ENCODE measurements at regions of chr5 and their contacts with region 1.

Region 1: GRCh38 chr5:113612060-113612496 is 98.6 kb downstream of the YTHDC2 start:
- DNase-seq: no peak
- ATAC-seq: peak; percentile 57
- H3K4me3 Mint-ChIP-seq: no peak overlapping the region
- H3K27ac Mint-ChIP-seq: no peak overlapping the region
- H3K4me1 Mint-ChIP-seq: peaks cover 7% of the 10 kb centered on the region
- H3K27me3 Mint-ChIP-seq: peaks cover 10% of the 10 kb centered on the region

Region 2: GRCh38 chr5:113663880-113664541 is 51.9 kb after region 1 on chr5:
- CTCF ChIA-PET with region 1: interaction called, 12 read pairs
- DNase-seq: peak; percentile 46
- ATAC-seq: no peak
- H3K4me3 Mint-ChIP-seq: no peak overlapping the region
- H3K27ac Mint-ChIP-seq: no peak overlapping the region
- H3K4me1 Mint-ChIP-seq: no peaks in the 10 kb centered on the region
- H3K27me3 Mint-ChIP-seq: peaks cover 39% of the 10 kb centered on the region

Region 3: GRCh38 chr5:114449860-114450421 is 837.9 kb after region 1 on chr5:
- CTCF ChIA-PET with region 1: interaction called, 19 read pairs
- DNase-seq: peak; percentile 57
- ATAC-seq: peak; percentile 77
- H3K4me3 Mint-ChIP-seq: no peak overlapping the region
- H3K27ac Mint-ChIP-seq: no peak overlapping the region
- H3K4me1 Mint-ChIP-seq: no peaks in the 10 kb centered on the region
- H3K27me3 Mint-ChIP-seq: peaks cover 2% of the 10 kb centered on the region

Measured in activated CD8-positive, alpha-beta memory T cell treated with anti-CD3 and anti-CD28 coated beads, Interleukin-2, amount 10 ng/mL, durations not matched to agents 7 days and 5 days (primary cell).